GM10248 (cell line): ENCODE measurements at regions of chr7 and their contacts with region 1.

Region 1: DNA sequence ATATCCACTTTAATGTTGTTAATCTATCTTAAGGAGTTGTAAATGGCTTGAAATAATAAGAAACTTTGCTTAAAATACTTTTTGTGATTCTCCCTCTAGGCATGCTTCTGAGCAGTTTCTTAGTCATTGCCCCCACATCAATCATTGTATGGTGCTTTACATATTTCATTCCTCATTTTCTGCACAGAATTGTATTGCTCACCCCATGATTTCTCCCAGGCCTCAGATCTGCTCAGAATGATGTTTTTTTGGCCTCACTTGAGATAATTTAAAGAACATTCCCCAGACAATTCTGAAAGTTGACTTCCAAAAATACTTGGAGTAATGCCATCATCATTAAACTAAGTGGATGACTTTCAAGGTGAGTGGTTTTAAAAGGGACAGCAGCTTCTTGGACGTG is 82.1 kb upstream of the PRPS1L1 start:
- DNase-seq: no peak
- CTCF ChIP-seq: no peak

Region 2: DNA sequence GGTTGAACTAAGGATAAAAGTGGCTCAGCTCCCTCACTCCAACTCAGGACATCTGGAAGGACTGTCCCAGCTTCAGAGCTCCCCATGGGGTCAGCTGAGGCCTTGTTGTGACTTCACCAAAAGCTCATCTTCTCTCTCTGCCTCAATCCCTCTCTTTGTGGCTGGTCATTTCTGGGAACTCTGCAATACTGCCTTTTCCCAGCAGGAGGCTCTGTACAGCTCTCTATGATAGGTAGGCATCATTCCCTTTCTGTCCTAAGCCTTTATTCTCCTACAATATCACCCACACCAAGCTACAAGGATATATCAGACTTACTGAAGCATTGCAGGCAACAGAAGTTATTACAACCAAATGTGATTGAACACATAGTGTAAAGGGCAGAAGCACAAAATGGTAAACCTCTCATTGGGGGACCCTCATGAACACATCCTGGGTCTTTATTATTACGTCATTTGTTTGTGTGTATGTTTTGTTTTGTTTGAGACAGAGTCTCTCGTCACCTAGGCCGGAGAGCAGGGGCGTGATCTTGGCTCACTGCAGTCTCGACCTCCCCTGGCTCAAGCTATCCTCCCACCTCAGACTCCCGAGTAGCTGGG is 45.4 kb before region 1 on chr7:
- CTCF ChIA-PET with region 1: no interaction called
- POLR2A ChIA-PET with region 1: no interaction called
- DNase-seq: peak; percentile 20
- CTCF ChIP-seq: peak; percentile 57

Region 3: DNA sequence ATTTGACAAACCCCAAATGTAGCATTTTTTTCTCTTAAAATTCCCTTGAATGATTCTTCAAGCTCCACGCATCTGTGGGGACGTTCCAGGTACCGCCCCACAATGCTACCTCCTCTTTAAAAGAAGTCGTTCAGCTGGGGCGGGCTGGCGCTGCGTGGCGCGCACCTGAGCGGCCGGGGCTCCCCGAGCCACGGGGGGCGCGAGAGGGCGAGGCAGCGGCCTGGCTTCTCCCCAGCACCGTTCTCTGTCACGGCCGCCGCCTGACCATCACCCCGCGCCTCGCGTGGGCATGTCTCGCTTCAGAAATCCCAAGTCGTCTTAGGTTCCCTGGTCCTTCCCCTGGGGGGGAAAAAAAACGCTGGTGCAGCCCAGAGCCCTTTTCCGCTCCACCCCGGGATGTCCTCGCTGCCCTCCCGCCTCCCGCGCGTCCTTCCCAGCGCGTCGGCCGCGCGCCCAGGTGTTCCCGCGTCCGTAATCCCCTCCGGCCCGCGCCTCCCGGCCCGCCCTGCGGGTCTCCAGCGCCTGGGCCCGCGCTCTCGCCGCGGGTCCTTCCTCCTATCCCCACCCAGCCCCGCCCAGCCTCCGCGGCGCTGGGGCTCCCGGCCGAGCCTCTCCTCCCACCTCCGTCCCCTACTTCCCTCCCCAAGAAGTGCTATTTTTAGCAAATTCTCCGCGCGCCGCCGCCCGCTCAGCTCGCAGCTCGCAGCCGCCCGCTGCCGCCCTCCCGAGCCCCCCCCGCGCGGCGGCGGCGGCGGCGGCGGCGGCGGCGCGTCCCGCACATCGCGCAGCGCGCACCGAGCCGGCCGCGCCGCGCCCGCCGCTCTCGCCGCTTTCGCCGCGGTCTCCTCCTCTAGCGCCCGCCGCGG is 23.4 kb before region 1 on chr7:
- CTCF ChIA-PET with region 1: interaction called, 11 read pairs
- POLR2A ChIA-PET with region 1: no interaction called
- DNase-seq: peak; percentile 10
- CTCF ChIP-seq: no peak

Region 4: GRCh38 chr7:18191341-18191740 is 81.6 kb after region 1 on chr7:
- CTCF ChIA-PET with region 1: no interaction called
- POLR2A ChIA-PET with region 1: no interaction called
- DNase-seq: no peak
- CTCF ChIP-seq: no peak

Region 5: GRCh38 chr7:18313965-18314364 is 204.2 kb after region 1 on chr7:
- CTCF ChIA-PET with region 1: no interaction called
- POLR2A ChIA-PET with region 1: no interaction called
- DNase-seq: no peak
- CTCF ChIP-seq: no peak